CD8-positive, alpha-beta memory T cell (primary cell): ENCODE measurements at regions of chr1 and their contacts with region 1.

Region 1: GRCh38 chr1:203673550-203674427 is 47.2 kb downstream of the ATP2B4 start:
- DNase-seq: peak; percentile 59 to 87 (median 74)
- H3K4me3 ChIP-seq: peak overlapping the region; percentile 11
- H3K4me3 Mint-ChIP-seq: peak overlapping the region; percentile 13 to 88 (median 83)
- H3K27ac ChIP-seq: peak overlapping the region; percentile 67
- H3K27ac Mint-ChIP-seq: peak overlapping the region; percentile 85 to 99 (median 97)
- H3K4me1 ChIP-seq: peaks cover 63% of the 10 kb centered on the region
- H3K4me1 Mint-ChIP-seq: peaks cover 68 to 98% (median 81%) of the 10 kb centered on the region in 3 donors
- H3K27me3 ChIP-seq: no peaks in the 10 kb centered on the region
- H3K27me3 Mint-ChIP-seq: no peaks in the 10 kb centered on the region

Region 2: DNA sequence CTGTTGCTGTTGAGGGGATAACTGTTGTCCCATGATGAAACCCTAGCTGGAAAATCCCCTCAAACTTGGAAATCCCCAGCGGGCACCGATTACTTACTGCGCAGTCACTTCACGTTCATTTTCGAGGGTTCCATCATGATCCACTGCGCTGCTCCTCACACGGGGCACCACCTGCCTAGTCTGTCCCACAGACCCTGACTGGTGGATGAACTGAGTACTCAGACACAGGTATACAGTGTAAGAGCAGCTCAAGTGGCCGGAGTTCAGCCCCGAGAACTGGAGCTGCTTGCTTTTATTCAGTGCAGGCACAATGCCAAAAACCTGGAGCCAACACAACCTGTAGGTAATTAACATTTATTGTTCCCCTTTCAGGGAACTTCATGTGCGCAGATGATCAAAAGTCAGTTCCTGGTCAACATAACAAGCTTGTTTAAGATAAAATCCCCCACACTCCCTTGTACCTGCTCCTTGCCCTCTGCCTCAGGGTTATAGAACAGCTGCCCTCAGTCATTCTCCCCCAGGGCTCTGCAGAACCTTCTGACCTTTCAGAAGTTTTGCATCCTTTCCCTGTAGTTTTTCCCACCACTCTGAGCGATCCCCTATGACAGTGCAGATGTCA is 244.7 kb before region 1 on chr1:
- CTCF ChIA-PET with region 1: no interaction called
- POLR2A ChIA-PET with region 1: no interaction called
- DNase-seq: no peak
- H3K4me3 ChIP-seq: no peak overlapping the region
- H3K4me3 Mint-ChIP-seq: no peak overlapping the region
- H3K27ac ChIP-seq: no peak overlapping the region
- H3K27ac Mint-ChIP-seq: no peak overlapping the region
- H3K4me1 ChIP-seq: no peaks in the 10 kb centered on the region
- H3K4me1 Mint-ChIP-seq: no peaks in the 10 kb centered on the region
- H3K27me3 ChIP-seq: no peaks in the 10 kb centered on the region
- H3K27me3 Mint-ChIP-seq: peaks cover 29 to 72% of the 10 kb centered on the region in 2 donors

Region 3: GRCh38 chr1:203534527-203535230 is 139.1 kb before region 1 on chr1:
- CTCF ChIA-PET with region 1: no interaction called
- POLR2A ChIA-PET with region 1: no interaction called
- DNase-seq: no peak
- H3K4me3 ChIP-seq: no peak overlapping the region
- H3K4me3 Mint-ChIP-seq: no peak overlapping the region
- H3K27ac ChIP-seq: no peak overlapping the region
- H3K27ac Mint-ChIP-seq: peak overlapping the region in 2 of 8 donors; percentile 3 to 47
- H3K4me1 ChIP-seq: no peaks in the 10 kb centered on the region
- H3K4me1 Mint-ChIP-seq: peaks cover 0 to 18% (median 13%) of the 10 kb centered on the region in 3 donors
- H3K27me3 ChIP-seq: no peaks in the 10 kb centered on the region
- H3K27me3 Mint-ChIP-seq: peaks cover 0 to 3% of the 10 kb centered on the region in 2 donors

Region 4: DNA sequence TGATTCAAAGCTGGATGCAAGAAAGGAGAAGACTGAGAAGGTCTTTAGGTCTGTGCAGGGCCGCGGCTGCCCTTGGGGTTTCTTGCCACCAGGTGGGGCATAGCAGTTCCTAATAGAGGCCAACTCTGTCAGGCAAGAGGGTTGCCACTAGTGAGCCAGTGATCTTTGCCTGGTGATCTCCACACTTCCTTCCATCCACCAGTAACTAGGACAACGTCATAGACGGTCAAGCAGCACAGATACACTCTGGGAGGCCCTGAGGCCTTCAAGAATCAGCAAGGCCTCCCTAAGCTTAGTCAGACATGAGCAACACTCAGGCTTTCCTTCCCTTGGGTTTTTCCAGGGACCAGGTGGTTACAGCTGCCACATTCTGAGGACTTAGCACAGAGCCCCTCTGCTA is 80.1 kb before region 1 on chr1:
- CTCF ChIA-PET with region 1: interaction called, 12 read pairs
- POLR2A ChIA-PET with region 1: no interaction called
- DNase-seq: peak; percentile 29 to 78 (median 47)
- H3K4me3 ChIP-seq: no peak overlapping the region
- H3K4me3 Mint-ChIP-seq: no peak overlapping the region
- H3K27ac ChIP-seq: no peak overlapping the region
- H3K27ac Mint-ChIP-seq: peak overlapping the region in 2 of 8 donors; percentile 30 to 74
- H3K4me1 ChIP-seq: no peaks in the 10 kb centered on the region
- H3K4me1 Mint-ChIP-seq: peaks cover 10 to 17% (median 11%) of the 10 kb centered on the region in 3 donors
- H3K27me3 ChIP-seq: no peaks in the 10 kb centered on the region
- H3K27me3 Mint-ChIP-seq: no peaks in the 10 kb centered on the region

Region 5: DNA sequence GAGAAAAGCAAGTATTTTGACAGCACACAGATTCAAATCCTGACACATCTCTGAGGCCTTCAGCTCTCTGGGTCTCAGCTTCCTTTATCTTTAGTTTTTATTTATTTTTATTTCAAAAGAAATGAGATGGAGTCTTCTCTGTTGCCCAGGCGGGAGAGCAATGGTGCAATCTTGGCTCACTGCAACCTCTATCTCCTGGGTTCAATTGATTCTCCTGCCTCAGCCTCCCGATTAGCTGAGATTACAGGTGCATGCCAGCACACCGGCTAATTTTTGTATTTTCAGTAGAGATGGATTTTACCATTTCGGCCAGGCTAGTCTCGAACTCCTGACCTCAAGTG is 66.3 kb before region 1 on chr1:
- CTCF ChIA-PET with region 1: interaction called, 10 read pairs
- POLR2A ChIA-PET with region 1: interaction called, 4 read pairs
- DNase-seq: no peak
- H3K4me3 ChIP-seq: no peak overlapping the region
- H3K4me3 Mint-ChIP-seq: peak overlapping the region in 3 of 7 donors; percentile 73 to 93 (median 81)
- H3K27ac ChIP-seq: no peak overlapping the region
- H3K27ac Mint-ChIP-seq: peak overlapping the region; percentile 82 to 100 (median 97)
- H3K4me1 ChIP-seq: peaks cover 37% of the 10 kb centered on the region
- H3K4me1 Mint-ChIP-seq: peaks cover 42 to 66% (median 65%) of the 10 kb centered on the region in 3 donors
- H3K27me3 ChIP-seq: no peaks in the 10 kb centered on the region
- H3K27me3 Mint-ChIP-seq: peaks cover 0 to 1% of the 10 kb centered on the region in 2 donors

Region 6: GRCh38 chr1:203649999-203650855 is 23.6 kb before region 1 on chr1:
- CTCF ChIA-PET with region 1: interaction called, 48 read pairs
- POLR2A ChIA-PET with region 1: interaction called, 17 read pairs
- DNase-seq: peak; percentile 41 to 89 (median 71)
- H3K4me3 ChIP-seq: peak overlapping the region; percentile 32
- H3K4me3 Mint-ChIP-seq: peak overlapping the region; percentile 68 to 93 (median 85)
- H3K27ac ChIP-seq: peak overlapping the region; percentile 57
- H3K27ac Mint-ChIP-seq: peak overlapping the region; percentile 93 to 100 (median 97)
- H3K4me1 ChIP-seq: peaks cover 66% of the 10 kb centered on the region
- H3K4me1 Mint-ChIP-seq: peaks cover 73 to 87% (median 82%) of the 10 kb centered on the region in 3 donors
- H3K27me3 ChIP-seq: no peaks in the 10 kb centered on the region
- H3K27me3 Mint-ChIP-seq: no peaks in the 10 kb centered on the region

Region 7: DNA sequence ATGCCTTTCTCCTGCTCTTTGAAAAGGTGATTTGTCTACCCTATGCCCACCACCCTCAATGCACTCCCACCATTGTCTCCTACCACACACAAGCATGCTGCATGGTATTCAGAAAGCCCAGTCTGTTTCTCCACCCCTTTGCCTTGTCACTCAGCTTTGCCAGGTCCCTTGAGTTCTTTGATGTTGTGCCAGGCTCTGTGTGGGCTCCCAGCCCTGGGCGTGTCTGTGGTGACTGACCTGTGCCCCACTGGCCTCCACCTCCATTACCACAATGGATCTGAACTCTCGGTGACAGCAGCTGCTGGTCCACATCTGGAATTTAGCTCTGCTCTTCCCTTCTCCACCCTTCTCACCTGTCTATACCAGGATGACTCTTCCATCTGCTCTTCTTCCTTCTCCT is 12.2 kb before region 1 on chr1:
- CTCF ChIA-PET with region 1: interaction called, 17 read pairs
- POLR2A ChIA-PET with region 1: no interaction called
- DNase-seq: no peak
- H3K4me3 ChIP-seq: no peak overlapping the region
- H3K4me3 Mint-ChIP-seq: peak overlapping the region in 4 of 7 donors; percentile 3 to 55 (median 24)
- H3K27ac ChIP-seq: no peak overlapping the region
- H3K27ac Mint-ChIP-seq: peak overlapping the region; percentile 65 to 94 (median 75)
- H3K4me1 ChIP-seq: peaks cover 51% of the 10 kb centered on the region
- H3K4me1 Mint-ChIP-seq: peaks cover 66 to 71% (median 69%) of the 10 kb centered on the region in 3 donors
- H3K27me3 ChIP-seq: no peaks in the 10 kb centered on the region
- H3K27me3 Mint-ChIP-seq: no peaks in the 10 kb centered on the region